Sigmoid colon (tissue), 7 donors: ENCODE measurements at regions of chr7 and their contacts with region 1.

Region 1: GRCh38 chr7:76262683-76263402 is 39.6 kb upstream of the HSPB1 start:
- DNase-seq: no peak
- H3K4me3 ChIP-seq: no peak overlapping the region
- H3K27ac ChIP-seq: no peak overlapping the region
- H3K4me1 ChIP-seq: peaks cover 0 to 21% (median 19%) of the 10 kb centered on the region in 4 donors
- H3K27me3 ChIP-seq: peaks cover 29 to 55% (median 44%) of the 10 kb centered on the region in 3 donors
- CTCF ChIP-seq: peak; percentile 17 to 61 (median 42)
- EP300 ChIP-seq: no peak
- POLR2A ChIP-seq: no peak

Region 2: DNA sequence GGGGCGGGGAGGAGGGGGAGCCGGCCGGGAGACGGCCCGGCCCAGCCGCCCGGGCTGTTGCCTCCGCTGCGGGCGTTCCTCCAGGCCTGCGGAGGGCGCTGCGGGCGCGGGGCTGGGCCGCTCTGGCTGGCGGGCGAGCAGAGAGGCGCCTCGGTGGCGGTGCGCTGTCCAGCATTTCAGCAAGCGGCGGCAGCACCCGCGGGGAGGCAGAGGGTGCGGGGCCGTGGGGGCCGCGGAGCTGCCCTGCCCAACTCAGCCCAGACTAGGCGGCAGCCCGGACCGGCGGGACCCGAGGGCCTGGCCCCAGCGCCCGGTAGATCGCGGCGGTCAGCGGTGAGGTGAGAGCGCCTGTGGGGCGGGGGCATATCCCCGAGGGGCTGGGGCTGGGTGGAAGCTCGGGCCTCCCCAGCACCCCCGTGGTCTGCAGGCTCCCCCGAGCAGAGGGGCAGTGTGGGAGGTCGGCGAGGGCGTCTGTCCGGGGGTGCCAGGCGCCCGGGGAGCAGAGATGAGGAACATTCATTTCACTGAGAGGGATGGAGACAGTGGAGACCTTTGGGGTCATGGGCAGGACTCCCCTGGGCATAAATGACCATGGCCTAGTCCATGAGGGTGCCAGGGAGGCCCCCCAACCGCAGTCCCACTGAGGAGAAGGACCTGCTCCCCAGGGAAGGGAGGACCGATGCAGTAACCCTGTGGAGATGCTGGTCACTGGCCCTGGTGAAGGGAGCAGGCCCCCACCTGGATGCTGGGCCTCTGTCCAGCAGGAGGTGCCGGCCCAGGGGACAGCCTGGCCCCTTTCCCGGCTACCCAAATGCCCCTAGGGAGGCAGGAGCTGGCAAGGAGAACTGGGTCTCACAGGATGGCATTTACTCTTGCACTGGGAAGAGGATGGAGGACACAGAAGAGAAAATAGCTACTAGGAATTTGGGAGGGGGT is 60.8 kb before region 1 on chr7 and contains the start of gene SRRM3:
- intact Hi-C with region 1: loop called (anchors 5 kb)
- DNase-seq: peak; percentile 72
- H3K4me3 ChIP-seq: no peak within 1 kb of the TSS
- H3K27ac ChIP-seq: no peak within 1 kb of the TSS
- H3K4me1 ChIP-seq: peaks cover 0 to 9% (median 4%) of the 10 kb centered on the region in 4 donors
- H3K27me3 ChIP-seq: peaks cover 0 to 41% (median 22%) of the 10 kb centered on the region in 3 donors
- CTCF ChIP-seq: peak in 1 of 4 experiments; percentile 63
- EP300 ChIP-seq: no peak
- POLR2A ChIP-seq: no peak
- total RNA-seq, gene SRRM3: 1.6 to 16.1 (median 6.3) TPM

Region 3: GRCh38 chr7:76225379-76225778 is 37.5 kb before region 1 on chr7:
- intact Hi-C with region 1: no loop called
- DNase-seq: no peak
- H3K4me3 ChIP-seq: no peak overlapping the region
- H3K27ac ChIP-seq: no peak overlapping the region
- H3K4me1 ChIP-seq: no peaks in the 10 kb centered on the region
- H3K27me3 ChIP-seq: peaks cover 10 to 58% (median 37%) of the 10 kb centered on the region in 3 donors
- CTCF ChIP-seq: no peak
- EP300 ChIP-seq: no peak
- POLR2A ChIP-seq: no peak